Heart left ventricle (tissue), 16 donors: ENCODE measurements at regions of chr13 and their contacts with region 1.

Region 1: GRCh38 chr13:33349986-33350826 is 64.7 kb upstream of the STARD13 start:
- DNase-seq: peak; percentile 60 to 84 (median 70)
- ATAC-seq: peak; percentile 20 to 88 (median 72)
- H3K4me3 ChIP-seq: peak overlapping the region; percentile 58 to 91 (median 86)
- H3K27ac ChIP-seq: peak overlapping the region; percentile 66 to 95 (median 87)
- H3K4me1 ChIP-seq: peaks cover 0 to 65% (median 23%) of the 10 kb centered on the region in 12 donors
- H3K27me3 ChIP-seq: no peaks in the 10 kb centered on the region
- CTCF ChIP-seq: no peak
- POLR2A ChIP-seq: peak in 1 of 2 donors; percentile 28

Region 2: DNA sequence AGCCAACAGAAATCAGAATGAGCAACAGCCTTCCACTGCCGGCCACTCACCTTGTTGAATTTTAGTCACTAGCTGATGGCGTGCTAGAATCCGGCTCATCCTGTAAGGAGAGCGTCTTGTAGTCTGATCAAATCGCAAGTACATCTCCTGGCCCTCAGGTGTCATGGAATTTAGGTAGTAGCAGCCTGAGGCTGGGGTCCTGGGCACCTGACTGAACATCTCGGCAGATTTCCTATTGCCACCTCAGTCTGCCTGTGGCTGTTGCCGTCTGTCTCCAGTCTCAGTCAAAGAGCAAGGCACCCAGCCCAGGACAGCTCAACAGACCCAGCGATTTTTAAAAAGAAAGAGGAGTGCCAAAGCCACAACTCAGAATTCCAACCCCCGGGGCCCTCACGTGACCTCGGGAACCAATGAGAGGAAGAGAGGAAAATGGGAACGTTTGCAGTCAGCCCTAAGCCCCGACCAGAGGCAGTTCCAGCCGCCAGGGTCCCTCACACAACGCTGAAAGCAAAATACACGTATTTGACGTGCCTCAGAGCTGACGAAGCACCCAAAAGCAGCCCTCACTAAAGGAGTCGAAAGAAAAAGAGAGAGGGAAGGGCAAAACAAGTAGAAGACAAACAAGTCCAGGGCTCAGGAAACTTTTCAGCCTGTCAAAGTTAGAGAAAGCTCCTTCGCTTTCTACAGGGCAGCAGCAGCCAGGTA is 64.6 kb before region 1 on chr13 and contains the start of gene STARD13:
- intact Hi-C with region 1: loop called in 3 of 10 experiments (anchors 5 kb)
- DNase-seq: peak; percentile 92 to 96 (median 95)
- ATAC-seq: peak; percentile 93 to 97 (median 95)
- H3K4me3 ChIP-seq: peak within 1 kb of the TSS; percentile 50 to 84 (median 68)
- H3K27ac ChIP-seq: peak within 1 kb of the TSS; percentile 89 to 98 (median 96)
- H3K4me1 ChIP-seq: peaks cover 0 to 56% (median 33%) of the 10 kb centered on the region in 12 donors
- H3K27me3 ChIP-seq: no peaks in the 10 kb centered on the region
- CTCF ChIP-seq: peak in 11 of 12 donors; percentile 11 to 68 (median 46)
- POLR2A ChIP-seq: peak in 1 of 2 donors; percentile 95
- total RNA-seq, gene STARD13: 18.6 to 39.2 (median 31.6) TPM

Region 3: DNA sequence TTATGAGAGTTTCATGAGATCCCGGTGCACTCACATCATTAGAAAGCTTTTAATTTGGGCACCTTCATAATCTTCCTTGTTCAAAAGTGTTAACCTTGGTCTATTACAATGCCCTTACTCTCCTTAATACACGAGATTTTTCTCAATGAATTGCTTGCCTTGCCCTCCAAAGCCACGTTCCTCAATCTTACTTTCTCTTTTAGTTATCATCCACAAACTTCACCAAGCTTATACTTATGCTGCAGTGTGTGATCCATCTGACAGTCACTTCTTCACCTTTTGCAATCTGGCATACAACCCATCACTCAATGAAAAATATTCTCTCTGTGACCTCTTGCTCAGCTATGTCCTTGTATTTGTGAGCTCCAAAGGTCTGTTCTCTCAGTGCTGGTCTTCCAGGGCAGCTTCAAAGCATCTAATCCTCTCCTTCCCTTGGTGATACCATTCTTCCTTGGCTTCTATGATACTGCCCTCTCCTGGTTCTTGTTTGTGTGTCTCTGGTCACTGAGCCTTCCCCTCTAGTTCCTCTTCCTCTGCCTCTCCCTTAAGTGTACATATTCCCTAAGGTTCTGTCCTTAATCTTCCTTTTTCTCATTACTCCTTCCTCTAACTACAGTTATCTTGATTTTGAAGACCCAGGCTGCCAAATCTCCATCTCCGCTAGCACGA is 137.5 kb after region 1 on chr13:
- intact Hi-C with region 1: loop called in 1 of 10 experiments (anchors 10 kb)
- DNase-seq: no peak
- ATAC-seq: peak; percentile 52 to 93 (median 89)
- H3K4me3 ChIP-seq: peak overlapping the region in 9 of 12 donors; percentile 0 to 41 (median 28)
- H3K27ac ChIP-seq: peak overlapping the region in 6 of 12 donors; percentile 4 to 58 (median 24)
- H3K4me1 ChIP-seq: peaks cover 0 to 20% (median 2%) of the 10 kb centered on the region in 12 donors
- H3K27me3 ChIP-seq: no peaks in the 10 kb centered on the region
- CTCF ChIP-seq: peak; percentile 17 to 60 (median 38)
- POLR2A ChIP-seq: no peak

Region 4: DNA sequence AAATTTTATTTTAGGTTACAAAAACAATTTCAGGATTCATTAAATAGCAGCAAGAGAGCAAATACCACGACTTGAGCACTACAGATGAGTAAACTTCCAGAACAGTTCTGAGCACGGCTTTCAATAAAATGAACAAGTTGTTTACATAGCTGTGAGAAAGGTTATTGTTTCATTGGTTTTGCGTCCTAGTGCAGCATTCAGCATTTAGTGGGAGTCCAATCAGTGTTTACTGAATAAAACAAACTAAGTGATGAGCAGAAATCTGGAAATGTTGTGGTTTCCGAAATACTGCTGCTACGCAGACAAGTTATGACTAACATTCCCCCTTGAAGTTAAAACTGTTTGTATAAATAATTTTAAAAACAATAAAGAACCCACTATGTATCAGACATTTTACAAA is 186.8 kb after region 1 on chr13:
- intact Hi-C with region 1: loop called in 6 of 10 experiments (anchors 2 to 5 kb)
- DNase-seq: no peak
- ATAC-seq: no peak
- H3K4me3 ChIP-seq: peak overlapping the region in 1 of 12 donors; percentile 17
- H3K27ac ChIP-seq: peak overlapping the region in 4 of 12 donors; percentile 4 to 97 (median 26)
- H3K4me1 ChIP-seq: peaks cover 0 to 37% (median 14%) of the 10 kb centered on the region in 12 donors
- H3K27me3 ChIP-seq: no peaks in the 10 kb centered on the region
- CTCF ChIP-seq: no peak
- POLR2A ChIP-seq: no peak